ENCODE measurements at regions of chr5 and their contacts with region 1.

Region 1: DNA sequence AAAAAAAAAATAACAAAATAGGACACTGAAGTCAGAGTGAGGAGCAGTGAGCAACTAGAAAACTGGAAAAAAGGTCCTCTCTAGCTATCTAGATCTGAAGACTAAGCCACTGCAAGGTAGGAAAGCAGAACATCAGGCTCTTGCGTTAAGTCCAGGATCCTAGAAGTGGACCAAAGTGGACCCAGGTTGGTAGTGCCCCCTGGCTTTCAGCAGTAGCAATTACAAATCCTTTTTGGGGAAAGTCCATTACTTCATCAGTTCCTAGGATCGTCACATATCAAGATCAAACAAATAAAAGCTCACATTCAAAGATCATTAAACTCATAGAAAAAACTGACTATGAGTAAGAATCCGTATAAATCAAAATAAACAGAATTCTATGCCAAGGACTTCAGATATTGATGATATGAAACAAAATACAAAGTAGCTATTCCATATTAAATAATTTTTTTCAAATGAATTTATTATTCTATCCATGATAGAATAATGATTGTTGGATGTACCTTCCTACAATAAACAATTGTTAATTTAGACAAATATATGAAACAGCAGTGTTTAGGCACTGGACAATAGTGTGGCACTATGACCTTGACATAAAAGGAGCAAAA is 6.5 kb upstream of the RICTOR start:
- DNase-seq: no peak
- ATAC-seq: peak; percentile 60
- H3K4me3 ChIP-seq: no peak overlapping the region
- H3K27ac ChIP-seq: no peak overlapping the region
- H3K4me1 ChIP-seq: peaks cover 4% of the 10 kb centered on the region; the same call in 1 of the 2 replicates
- H3K27me3 ChIP-seq: no peaks in the 10 kb centered on the region
- CTCF ChIP-seq: peak; percentile 79 to 80 (median 80)
- EP300 ChIP-seq: no peak
- POLR2A ChIP-seq: no peak
- RAD21 ChIP-seq: peak; percentile 74

Region 2: GRCh38 chr5:38922199-38922598 is 158.5 kb before region 1 on chr5:
- CTCF ChIA-PET with region 1: interaction called, 13 read pairs
- POLR2A ChIA-PET with region 1: no interaction called
- RAD21 ChIA-PET with region 1: interaction called, 4 read pairs
- SMC1A ChIA-PET with region 1: interaction called, 20 read pairs
- in situ Hi-C with region 1: no loop called
- intact Hi-C with region 1: no loop called
- DNase-seq: no peak
- ATAC-seq: peak; percentile 97
- H3K4me3 ChIP-seq: no peak overlapping the region
- H3K27ac ChIP-seq: no peak overlapping the region
- H3K4me1 ChIP-seq: no peaks in the 10 kb centered on the region
- H3K27me3 ChIP-seq: no peaks in the 10 kb centered on the region
- CTCF ChIP-seq: peak; percentile 75 to 89 (median 83)
- EP300 ChIP-seq: no peak
- POLR2A ChIP-seq: no peak
- RAD21 ChIP-seq: peak; percentile 66

Region 3: GRCh38 chr5:38968665-38969064 is 112.0 kb before region 1 on chr5:
- CTCF ChIA-PET with region 1: interaction called, 32 read pairs
- POLR2A ChIA-PET with region 1: interaction called, 3 read pairs
- RAD21 ChIA-PET with region 1: interaction called, 8 read pairs
- SMC1A ChIA-PET with region 1: interaction called, 5 read pairs
- in situ Hi-C with region 1: no loop called
- intact Hi-C with region 1: no loop called
- DNase-seq: no peak
- ATAC-seq: no peak
- H3K4me3 ChIP-seq: no peak overlapping the region
- H3K27ac ChIP-seq: no peak overlapping the region
- H3K4me1 ChIP-seq: no peaks in the 10 kb centered on the region
- H3K27me3 ChIP-seq: no peaks in the 10 kb centered on the region
- CTCF ChIP-seq: no peak
- EP300 ChIP-seq: no peak
- POLR2A ChIP-seq: no peak
- RAD21 ChIP-seq: no peak

Region 4: DNA sequence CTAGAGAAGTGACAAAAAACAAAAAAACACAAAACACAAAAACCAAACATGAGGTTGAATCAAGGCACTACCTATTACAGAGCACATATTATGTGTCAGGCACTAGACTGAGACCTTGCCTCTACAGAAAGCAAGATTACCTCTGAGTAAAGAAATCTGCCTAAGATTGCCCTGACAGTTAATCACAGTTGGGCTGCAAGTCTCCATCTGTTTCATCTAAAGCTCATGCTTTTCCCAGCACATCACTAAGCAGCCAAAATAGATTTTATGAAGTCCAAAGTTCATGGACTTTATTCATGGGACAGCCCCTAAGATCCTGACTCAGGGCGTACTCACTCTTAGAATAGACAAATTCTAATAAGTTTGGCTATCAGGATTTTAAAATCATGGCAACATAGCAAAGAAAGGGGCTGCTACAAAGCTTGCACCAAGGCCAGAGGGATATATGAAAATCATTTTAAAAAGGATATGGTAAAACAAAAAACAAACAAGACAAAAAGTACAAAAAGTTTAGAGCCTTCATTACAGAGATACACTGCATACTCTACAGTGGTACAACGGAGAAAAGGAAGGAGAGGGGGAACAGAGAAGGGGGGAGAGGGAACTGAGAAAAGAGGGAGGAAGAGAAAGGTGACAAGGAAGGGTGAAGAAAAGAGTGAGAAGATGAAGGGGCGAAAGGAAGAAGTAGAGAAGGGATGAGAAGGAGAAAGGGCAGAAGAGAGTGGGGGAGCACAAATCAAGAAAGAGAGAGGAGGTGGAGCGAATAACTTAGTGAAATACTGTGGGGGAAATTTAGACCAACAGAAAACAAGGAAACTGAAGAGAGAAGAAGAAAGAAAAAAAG is 64.7 kb before region 1 on chr5:
- CTCF ChIA-PET with region 1: interaction called, 18 read pairs
- POLR2A ChIA-PET with region 1: interaction called, 3 read pairs
- RAD21 ChIA-PET with region 1: interaction called, 9 read pairs
- SMC1A ChIA-PET with region 1: interaction called, 10 read pairs
- in situ Hi-C with region 1: no loop called
- intact Hi-C with region 1: no loop called
- DNase-seq: no peak
- ATAC-seq: 0 out of 3 replicates have a peak, but pooled peaks have one; percentile 25
- H3K4me3 ChIP-seq: no peak overlapping the region
- H3K27ac ChIP-seq: no peak overlapping the region
- H3K4me1 ChIP-seq: no peaks in the 10 kb centered on the region
- H3K27me3 ChIP-seq: no peaks in the 10 kb centered on the region
- CTCF ChIP-seq: no peak
- EP300 ChIP-seq: no peak
- POLR2A ChIP-seq: no peak
- RAD21 ChIP-seq: no peak

Region 5: DNA sequence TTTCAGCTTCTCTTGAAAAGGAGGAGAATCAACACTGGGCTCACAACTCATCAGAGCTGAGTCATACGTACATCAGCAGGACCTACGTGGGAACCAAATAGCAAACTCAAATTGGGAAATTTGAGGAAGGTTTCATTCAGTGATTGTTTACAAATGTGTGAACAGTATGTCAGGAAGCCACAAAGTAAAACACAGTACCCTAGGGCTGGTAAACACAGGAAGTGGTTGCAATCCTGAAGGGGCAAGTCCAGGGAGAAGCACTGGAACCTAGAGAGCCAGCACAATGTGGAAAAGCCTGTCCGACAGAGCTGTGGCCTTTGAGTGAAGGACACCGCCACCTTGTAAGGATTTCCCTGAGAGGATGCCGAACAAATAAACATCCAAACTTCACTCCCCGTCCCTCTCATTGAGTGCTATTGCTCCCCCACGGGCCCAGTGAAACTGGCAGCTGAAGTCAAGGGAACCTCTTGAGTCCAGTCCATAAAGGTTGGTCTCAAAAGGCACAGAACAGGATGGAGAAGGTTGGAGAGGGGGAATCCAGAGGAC is 20.2 kb after region 1 on chr5:
- CTCF ChIA-PET with region 1: interaction called, 16 read pairs
- POLR2A ChIA-PET with region 1: no interaction called
- RAD21 ChIA-PET with region 1: interaction called, 3 read pairs
- SMC1A ChIA-PET with region 1: interaction called, 12 read pairs
- in situ Hi-C with region 1: no loop called
- intact Hi-C with region 1: no loop called
- DNase-seq: no peak
- ATAC-seq: no peak
- H3K4me3 ChIP-seq: no peak overlapping the region
- H3K27ac ChIP-seq: no peak overlapping the region
- H3K4me1 ChIP-seq: no peaks in the 10 kb centered on the region
- H3K27me3 ChIP-seq: no peaks in the 10 kb centered on the region
- CTCF ChIP-seq: no peak
- EP300 ChIP-seq: no peak
- POLR2A ChIP-seq: no peak
- RAD21 ChIP-seq: no peak

Region 6: GRCh38 chr5:39132128-39132447 is 51.4 kb after region 1 on chr5:
- CTCF ChIA-PET with region 1: no interaction called
- POLR2A ChIA-PET with region 1: no interaction called
- RAD21 ChIA-PET with region 1: no interaction called
- SMC1A ChIA-PET with region 1: no interaction called
- in situ Hi-C with region 1: no loop called
- intact Hi-C with region 1: no loop called
- DNase-seq: no peak
- ATAC-seq: no peak
- H3K4me3 ChIP-seq: no peak overlapping the region
- H3K27ac ChIP-seq: no peak overlapping the region
- H3K4me1 ChIP-seq: no peaks in the 10 kb centered on the region
- H3K27me3 ChIP-seq: no peaks in the 10 kb centered on the region
- CTCF ChIP-seq: no peak
- EP300 ChIP-seq: no peak
- POLR2A ChIP-seq: no peak
- RAD21 ChIP-seq: no peak

Region 7: DNA sequence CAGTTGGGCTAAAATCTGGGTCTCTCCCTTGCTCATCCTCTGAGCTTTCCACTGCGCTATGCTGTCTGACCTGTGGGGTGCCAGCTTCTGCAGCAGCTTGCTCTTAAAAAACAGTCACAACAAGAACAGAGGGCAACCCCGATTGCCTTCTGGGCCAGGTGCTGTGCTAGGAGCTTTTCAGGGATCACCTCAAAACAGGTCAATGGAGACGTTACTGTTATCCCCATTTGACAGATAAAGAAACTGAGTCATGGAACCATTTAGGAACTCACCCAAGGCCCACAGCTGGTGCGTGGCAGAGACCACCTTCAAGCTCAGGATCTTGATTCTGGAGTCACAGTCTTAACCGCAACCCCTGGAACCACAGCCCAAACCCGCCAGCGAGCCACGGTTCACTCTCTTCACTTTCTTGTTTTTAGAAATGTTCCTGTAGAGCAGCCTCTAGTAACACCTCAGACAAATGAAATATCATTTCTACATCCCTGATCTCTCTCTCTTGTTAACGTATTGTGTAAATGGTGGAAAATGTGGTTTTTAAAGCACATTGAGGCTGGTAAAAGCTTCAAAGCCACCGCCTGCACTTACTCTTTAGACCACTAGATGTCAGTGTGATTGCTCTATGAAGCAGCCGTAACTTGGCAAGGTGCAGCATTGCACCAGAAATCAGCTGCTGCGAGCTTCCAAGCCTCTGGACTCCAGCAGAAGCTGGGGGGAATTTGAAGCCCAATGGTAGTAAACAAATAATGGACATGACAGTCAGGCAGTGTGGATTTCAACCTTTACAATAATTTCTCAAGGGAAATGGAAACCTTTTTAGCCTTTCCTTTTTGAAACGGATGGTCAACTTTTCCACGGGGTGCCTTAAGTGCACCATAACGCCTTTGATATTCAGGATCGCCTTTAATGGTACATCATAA is 136.9 kb after region 1 on chr5:
- CTCF ChIA-PET with region 1: interaction called, 8 read pairs
- POLR2A ChIA-PET with region 1: no interaction called
- RAD21 ChIA-PET with region 1: interaction called, 3 read pairs
- SMC1A ChIA-PET with region 1: interaction called, 12 read pairs
- in situ Hi-C with region 1: no loop called
- intact Hi-C with region 1: no loop called
- DNase-seq: peak; percentile 36
- ATAC-seq: peak; percentile 89
- H3K4me3 ChIP-seq: no peak overlapping the region
- H3K27ac ChIP-seq: no peak overlapping the region
- H3K4me1 ChIP-seq: no peaks in the 10 kb centered on the region
- H3K27me3 ChIP-seq: no peaks in the 10 kb centered on the region
- CTCF ChIP-seq: peak; percentile 92 to 96 (median 95)
- EP300 ChIP-seq: no peak
- POLR2A ChIP-seq: no peak
- RAD21 ChIP-seq: peak; percentile 84

Measured in GM12878 (cell line).